Esophagus muscularis mucosa (tissue), 4 donors: ENCODE measurements at regions of chr6 and their contacts with region 1.

Region 1: GRCh38 chr6:79777713-79778579 is 146.8 kb downstream of the SH3BGRL2 start:
- DNase-seq: no peak
- H3K4me3 ChIP-seq: peak overlapping the region; percentile 34 to 46 (median 40)
- H3K27ac ChIP-seq: no peak overlapping the region
- H3K4me1 ChIP-seq: peaks cover 0 to 11% (median 8%) of the 10 kb centered on the region in 4 donors
- H3K27me3 ChIP-seq: no peaks in the 10 kb centered on the region
- CTCF ChIP-seq: peak in 2 of 3 experiments; percentile 89 to 96
- EP300 ChIP-seq: no peak
- POLR2A ChIP-seq: no peak

Region 2: DNA sequence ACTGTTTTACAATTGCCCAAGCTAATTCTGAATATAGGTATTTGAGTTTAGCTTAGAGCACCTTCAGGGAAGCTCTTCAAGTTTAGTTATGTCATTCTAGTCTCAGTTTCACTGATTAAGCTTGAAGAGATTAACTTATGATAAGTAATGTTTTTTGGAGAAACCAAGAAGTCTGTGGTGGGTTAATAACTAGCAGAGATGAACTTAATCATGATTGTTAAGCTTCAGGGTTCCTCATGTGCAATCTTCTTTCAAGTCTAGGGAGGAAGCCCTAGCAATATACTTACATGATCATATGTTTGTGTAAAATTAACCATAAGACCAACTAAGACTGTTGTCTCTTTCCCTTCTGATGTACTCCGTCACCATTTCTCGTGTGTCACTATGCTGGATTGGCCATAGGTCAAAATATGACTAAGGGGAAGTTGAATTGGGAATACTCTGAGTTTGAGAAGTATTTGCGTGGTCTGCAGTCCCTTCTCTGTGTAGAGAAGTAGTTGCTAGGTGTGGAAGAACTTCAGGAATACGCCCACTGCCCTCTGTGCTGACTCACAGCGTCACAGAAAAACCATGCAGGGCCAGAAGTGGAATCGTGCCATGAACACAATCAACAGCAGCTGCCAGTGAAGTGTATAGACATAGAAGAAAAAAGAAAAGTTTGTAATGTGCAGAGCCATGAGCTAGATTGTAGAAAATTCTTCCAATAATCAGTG is 58.5 kb before region 1 on chr6:
- intact Hi-C with region 1: no loop called
- DNase-seq: no peak
- H3K4me3 ChIP-seq: no peak overlapping the region
- H3K27ac ChIP-seq: no peak overlapping the region
- H3K4me1 ChIP-seq: no peaks in the 10 kb centered on the region
- H3K27me3 ChIP-seq: no peaks in the 10 kb centered on the region
- CTCF ChIP-seq: no peak
- EP300 ChIP-seq: no peak
- POLR2A ChIP-seq: no peak

Region 3: GRCh38 chr6:79813854-79814709 is 36.1 kb after region 1 on chr6:
- intact Hi-C with region 1: loop called (anchors 2 kb)
- DNase-seq: no peak
- H3K4me3 ChIP-seq: no peak overlapping the region
- H3K27ac ChIP-seq: no peak overlapping the region
- H3K4me1 ChIP-seq: peaks cover 0 to 20% (median 10%) of the 10 kb centered on the region in 4 donors
- H3K27me3 ChIP-seq: no peaks in the 10 kb centered on the region
- CTCF ChIP-seq: peak; percentile 75 to 90 (median 85)
- EP300 ChIP-seq: no peak
- POLR2A ChIP-seq: no peak

Region 4: DNA sequence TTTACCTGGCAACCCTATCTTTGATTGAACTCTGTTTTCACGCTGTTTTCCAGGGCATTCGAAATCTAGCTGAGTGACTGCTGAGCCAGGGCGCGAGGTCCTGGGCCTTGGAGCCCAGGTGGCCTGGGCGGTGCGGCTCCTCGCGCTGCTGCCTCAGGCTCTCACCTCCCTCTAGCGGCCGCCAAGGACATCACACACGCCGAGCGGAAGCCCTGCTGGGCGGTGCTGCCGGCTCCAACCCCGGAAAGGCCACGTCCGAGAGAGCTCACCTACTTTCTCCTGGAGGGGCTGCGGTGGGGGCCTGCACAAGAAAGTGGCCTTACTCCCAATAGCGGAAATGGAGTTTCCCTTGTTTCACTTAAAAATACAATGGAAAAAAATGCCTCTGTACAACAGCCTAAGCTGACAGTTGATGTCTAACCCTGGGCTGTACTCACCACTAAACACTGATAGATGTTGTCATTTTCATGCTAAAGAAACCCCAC is 91.7 kb after region 1 on chr6:
- intact Hi-C with region 1: loop called (anchors 2 kb)
- DNase-seq: no peak
- H3K4me3 ChIP-seq: peak overlapping the region; percentile 22 to 49 (median 32)
- H3K27ac ChIP-seq: no peak overlapping the region
- H3K4me1 ChIP-seq: peaks cover 0 to 18% (median 6%) of the 10 kb centered on the region in 4 donors
- H3K27me3 ChIP-seq: no peaks in the 10 kb centered on the region
- CTCF ChIP-seq: peak; percentile 80 to 97 (median 87)
- EP300 ChIP-seq: no peak
- POLR2A ChIP-seq: no peak

Region 5: DNA sequence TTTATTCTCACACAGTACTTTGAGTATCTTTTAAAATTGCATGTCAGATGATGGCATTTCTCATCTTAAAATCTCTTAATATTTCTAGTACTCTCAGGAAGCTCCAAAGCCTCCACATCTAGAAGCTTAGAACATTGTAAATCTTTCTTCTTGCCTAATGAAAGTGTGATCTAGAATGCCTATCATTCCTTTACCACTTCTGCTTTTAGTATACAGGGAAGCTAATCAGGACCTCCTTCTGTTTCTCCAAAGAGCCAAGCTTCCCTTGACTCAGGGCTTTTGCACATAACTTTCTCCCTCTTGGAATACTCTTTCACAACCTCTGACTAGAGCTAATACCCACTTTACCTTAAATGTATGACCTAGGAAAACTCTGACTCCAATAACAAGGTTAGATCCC is 176.9 kb after region 1 on chr6:
- intact Hi-C with region 1: no loop called
- DNase-seq: no peak
- H3K4me3 ChIP-seq: no peak overlapping the region
- H3K27ac ChIP-seq: no peak overlapping the region
- H3K4me1 ChIP-seq: no peaks in the 10 kb centered on the region
- H3K27me3 ChIP-seq: peaks cover 0 to 4% (median 0%) of the 10 kb centered on the region in 4 donors
- CTCF ChIP-seq: no peak
- EP300 ChIP-seq: no peak
- POLR2A ChIP-seq: no peak

Region 6: DNA sequence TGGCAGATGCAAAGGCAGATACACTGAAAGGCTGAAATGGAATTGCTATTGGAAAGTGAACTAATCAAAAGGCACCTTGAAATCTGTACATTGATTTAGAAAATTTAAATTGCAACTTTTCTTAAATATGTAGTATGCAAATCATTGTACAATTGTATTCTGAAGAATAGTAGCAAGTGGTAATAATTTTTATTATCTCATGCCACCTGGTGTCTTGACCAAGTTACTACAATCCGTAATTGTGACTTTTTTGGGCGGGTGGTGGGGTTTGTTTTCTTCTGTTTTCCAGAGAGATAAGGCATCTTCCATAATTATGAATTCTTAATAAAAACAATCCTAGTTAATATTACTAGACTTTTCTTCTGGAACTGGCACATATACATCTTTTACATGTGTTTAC is 316.1 kb after region 1 on chr6:
- intact Hi-C with region 1: loop called (anchors 10 kb)
- DNase-seq: no peak
- H3K4me3 ChIP-seq: no peak overlapping the region
- H3K27ac ChIP-seq: no peak overlapping the region
- H3K4me1 ChIP-seq: no peaks in the 10 kb centered on the region
- H3K27me3 ChIP-seq: no peaks in the 10 kb centered on the region
- CTCF ChIP-seq: peak; percentile 45 to 62 (median 55)
- EP300 ChIP-seq: no peak
- POLR2A ChIP-seq: no peak

Region 7: GRCh38 chr6:80143419-80143937 is 365.5 kb after region 1 on chr6:
- intact Hi-C with region 1: no loop called
- DNase-seq: no peak
- H3K4me3 ChIP-seq: no peak overlapping the region
- H3K27ac ChIP-seq: peak overlapping the region in 3 of 4 donors; percentile 20 to 44 (median 24)
- H3K4me1 ChIP-seq: peaks cover 22 to 37% (median 36%) of the 10 kb centered on the region in 4 donors
- H3K27me3 ChIP-seq: no peaks in the 10 kb centered on the region
- CTCF ChIP-seq: no peak
- EP300 ChIP-seq: no peak
- POLR2A ChIP-seq: no peak